Activated CD4-positive, alpha-beta T cell treated with anti-CD3 and anti-CD28 coated beads for 36 hours (primary cell): ENCODE measurements at regions of chr20 and their contacts with region 1.

Region 1: GRCh38 chr20:5126512-5127203 is at the start of gene CDS2:
- DNase-seq: peak; percentile 100
- ATAC-seq: peak; percentile 89
- H3K4me3 Mint-ChIP-seq: peak within 1 kb of the TSS; percentile 80
- H3K27ac Mint-ChIP-seq: peak within 1 kb of the TSS; percentile 95
- H3K4me1 Mint-ChIP-seq: peaks cover 34% of the 10 kb centered on the region
- H3K27me3 Mint-ChIP-seq: no peaks in the 10 kb centered on the region
- total RNA-seq, gene CDS2: 34.3 to 41.3 TPM

Region 2: GRCh38 chr20:5078399-5078958 is 48.2 kb before region 1 on chr20:
- CTCF ChIA-PET with region 1: no interaction called
- POLR2A ChIA-PET with region 1: no interaction called
- intact Hi-C with region 1: loop called in 1 of 2 experiments (anchors 1 kb)
- DNase-seq: peak; percentile 90
- ATAC-seq: peak; percentile 95
- H3K4me3 Mint-ChIP-seq: peak overlapping the region; percentile 58
- H3K27ac Mint-ChIP-seq: peak overlapping the region; percentile 93
- H3K4me1 Mint-ChIP-seq: peaks cover 38% of the 10 kb centered on the region
- H3K27me3 Mint-ChIP-seq: no peaks in the 10 kb centered on the region

Region 3: GRCh38 chr20:5153612-5154542 is 27.2 kb after region 1 on chr20:
- CTCF ChIA-PET with region 1: interaction called, 16 read pairs
- POLR2A ChIA-PET with region 1: no interaction called
- intact Hi-C with region 1: no loop called
- DNase-seq: peak; percentile 27
- ATAC-seq: peak; percentile 80
- H3K4me3 Mint-ChIP-seq: no peak overlapping the region
- H3K27ac Mint-ChIP-seq: peak overlapping the region; percentile 10
- H3K4me1 Mint-ChIP-seq: peaks cover 60% of the 10 kb centered on the region
- H3K27me3 Mint-ChIP-seq: no peaks in the 10 kb centered on the region

Region 4: GRCh38 chr20:5222919-5223634 is 96.4 kb after region 1 on chr20:
- CTCF ChIA-PET with region 1: interaction called, 20 read pairs
- POLR2A ChIA-PET with region 1: interaction called, 4 read pairs
- intact Hi-C with region 1: loop called in 1 of 2 experiments (anchors 1 kb)
- DNase-seq: peak; percentile 80
- ATAC-seq: peak; percentile 75
- H3K4me3 Mint-ChIP-seq: no peak overlapping the region
- H3K27ac Mint-ChIP-seq: no peak overlapping the region
- H3K4me1 Mint-ChIP-seq: no peaks in the 10 kb centered on the region
- H3K27me3 Mint-ChIP-seq: peaks cover 2% of the 10 kb centered on the region

Region 5: GRCh38 chr20:5328268-5328667 is 201.6 kb after region 1 on chr20:
- CTCF ChIA-PET with region 1: no interaction called
- POLR2A ChIA-PET with region 1: no interaction called
- intact Hi-C with region 1: no loop called
- DNase-seq: no peak
- ATAC-seq: no peak
- H3K4me3 Mint-ChIP-seq: no peak overlapping the region
- H3K27ac Mint-ChIP-seq: no peak overlapping the region
- H3K4me1 Mint-ChIP-seq: no peaks in the 10 kb centered on the region
- H3K27me3 Mint-ChIP-seq: peaks cover 19% of the 10 kb centered on the region

Region 6: GRCh38 chr20:5749952-5750779 is 623.5 kb after region 1 on chr20 and contains the start of gene SHLD1:
- CTCF ChIA-PET with region 1: no interaction called
- POLR2A ChIA-PET with region 1: no interaction called
- intact Hi-C with region 1: loop called in 1 of 2 experiments (anchors 10 kb)
- DNase-seq: peak; percentile 89
- ATAC-seq: peak; percentile 98
- H3K4me3 Mint-ChIP-seq: peak within 1 kb of the TSS; percentile 86
- H3K27ac Mint-ChIP-seq: peak within 1 kb of the TSS; percentile 94
- H3K4me1 Mint-ChIP-seq: peaks cover 19% of the 10 kb centered on the region
- H3K27me3 Mint-ChIP-seq: no peaks in the 10 kb centered on the region
- total RNA-seq, gene SHLD1: 10.4 to 10.5 TPM